Lower leg skin (tissue), 4 donors: ENCODE measurements at regions of chr2 and their contacts with region 1.

Region 1: GRCh38 chr2:8794923-8795825 is 42.2 kb downstream of the KIDINS220 start:
- DNase-seq: no peak
- H3K4me3 ChIP-seq: no peak overlapping the region
- CTCF ChIP-seq: no peak
- POLR2A ChIP-seq: no peak

Region 2: GRCh38 chr2:8857709-8858108 is 62.5 kb after region 1 on chr2:
- intact Hi-C with region 1: no loop called
- DNase-seq: no peak
- H3K4me3 ChIP-seq: no peak overlapping the region
- CTCF ChIP-seq: no peak
- POLR2A ChIP-seq: no peak

Region 3: GRCh38 chr2:10220902-10221391 is 1425.8 kb after region 1 on chr2:
- intact Hi-C with region 1: loop called (anchors 5 kb)
- DNase-seq: no peak
- H3K4me3 ChIP-seq: no peak overlapping the region
- CTCF ChIP-seq: no peak
- POLR2A ChIP-seq: no peak